Posterior cingulate gyrus (tissue), 11 donors: ENCODE measurements at regions of chr6 and their contacts with region 1.

Region 1: GRCh38 chr6:111483736-111484632 is 966 bp upstream of the REV3L start:
- DNase-seq: peak; percentile 72 to 98 (median 82)

Region 2: DNA sequence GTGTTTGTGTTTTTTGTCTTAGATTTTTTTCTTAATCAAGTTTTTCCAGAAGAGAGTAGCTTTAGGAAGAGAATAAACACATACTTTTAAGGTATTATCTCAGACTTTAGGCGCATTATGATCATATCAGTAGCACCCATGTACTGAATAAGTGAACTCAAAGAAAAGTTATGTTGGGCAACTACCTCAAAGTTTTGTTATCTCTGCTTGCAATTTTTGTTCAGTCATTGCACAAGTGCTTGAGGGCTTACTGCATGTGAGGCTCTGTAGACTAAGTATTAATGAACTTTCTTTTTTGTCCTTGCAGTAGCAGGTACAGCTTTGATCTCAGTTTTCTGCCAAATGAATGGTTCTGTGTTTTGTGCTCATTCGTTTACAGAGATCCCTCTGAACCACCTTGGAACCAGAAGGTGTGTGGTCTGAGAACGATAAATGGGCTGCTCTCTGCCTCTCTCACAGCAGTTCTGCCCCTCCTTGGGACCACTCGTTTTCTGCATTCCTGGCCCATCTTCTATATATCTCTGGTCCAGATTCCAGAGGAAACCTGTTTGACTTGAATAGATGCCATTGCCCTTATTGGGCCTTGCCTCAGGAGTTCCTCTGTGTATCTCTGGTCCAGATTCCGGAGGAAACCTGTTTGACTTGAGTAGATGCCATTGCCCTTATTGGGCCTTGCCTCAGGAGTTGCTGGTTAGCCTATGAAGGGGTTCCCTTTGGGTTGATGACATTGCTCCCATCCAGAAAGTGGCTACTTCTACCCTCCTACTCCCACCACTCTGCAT is 207.5 kb before region 1 on chr6:
- intact Hi-C with region 1: no loop called
- DNase-seq: no peak

Region 3: GRCh38 chr6:111423960-111424846 is 59.8 kb before region 1 on chr6:
- intact Hi-C with region 1: loop called (anchors 5 kb)
- DNase-seq: peak; percentile 26 to 95 (median 56)

Region 4: GRCh38 chr6:111552241-111552744 is 68.3 kb after region 1 on chr6:
- intact Hi-C with region 1: loop called (anchors 10 kb)
- DNase-seq: peak in 8 of 10 donors; percentile 53 to 91 (median 64)

Region 5: DNA sequence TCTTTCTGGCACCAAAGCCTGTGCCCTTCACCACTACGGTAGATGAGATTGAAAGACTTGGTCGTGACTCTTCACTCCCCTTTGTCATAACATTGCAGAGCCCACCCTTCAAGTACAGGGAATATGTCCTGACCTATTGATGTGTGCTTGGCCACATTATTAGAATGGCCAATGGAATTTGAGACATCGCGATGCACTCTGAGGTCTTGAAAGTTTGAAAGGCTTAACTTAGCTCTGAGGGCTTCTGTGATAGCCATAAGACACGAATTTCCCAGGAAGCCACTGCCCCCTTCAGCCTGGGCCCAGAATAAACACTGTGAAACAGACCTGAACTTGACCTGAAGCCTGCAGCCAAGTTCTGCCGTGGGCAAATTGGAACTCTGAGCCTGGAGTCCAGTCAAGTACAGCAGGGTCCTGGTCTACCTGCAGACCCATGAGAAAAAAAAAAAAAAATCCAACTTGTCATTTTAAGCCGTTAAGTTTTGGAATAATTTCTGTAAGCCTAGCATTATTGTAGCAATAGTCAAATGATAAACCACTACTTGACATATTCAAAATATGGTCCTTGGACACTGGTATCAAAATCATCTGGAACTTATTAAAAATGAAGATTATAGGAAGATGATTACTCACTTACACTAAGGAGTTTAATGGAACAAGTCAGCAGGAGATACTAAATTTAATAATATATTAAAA is 158.6 kb after region 1 on chr6:
- intact Hi-C with region 1: loop called (anchors 10 kb)
- DNase-seq: peak in 6 of 10 donors; percentile 34 to 91 (median 54)

Region 6: DNA sequence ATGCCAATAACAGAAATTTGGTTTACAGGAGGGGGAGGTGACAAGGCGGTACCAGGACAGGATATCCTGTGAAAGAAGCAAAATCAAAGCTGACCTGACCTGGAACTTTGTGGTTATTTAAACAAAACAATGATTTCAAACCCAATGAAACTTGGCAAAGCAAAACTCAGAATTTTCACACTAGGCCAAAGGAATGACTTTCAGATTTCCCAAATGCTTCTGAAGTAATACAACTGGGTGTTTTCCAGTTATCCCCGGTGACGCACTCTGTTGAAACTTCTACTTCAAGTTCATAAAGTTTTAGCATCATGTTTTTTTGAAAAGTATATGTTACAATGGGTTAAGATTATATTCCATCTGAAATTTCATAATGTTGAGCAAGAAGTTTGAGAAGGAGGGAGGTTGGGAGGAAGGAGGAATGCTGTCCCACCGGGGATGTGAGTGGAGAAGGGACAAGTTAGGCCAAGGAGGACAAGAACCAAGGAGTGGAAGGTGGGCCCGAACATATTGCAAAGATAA is 199.8 kb after region 1 on chr6:
- intact Hi-C with region 1: no loop called
- DNase-seq: no peak

Region 7: DNA sequence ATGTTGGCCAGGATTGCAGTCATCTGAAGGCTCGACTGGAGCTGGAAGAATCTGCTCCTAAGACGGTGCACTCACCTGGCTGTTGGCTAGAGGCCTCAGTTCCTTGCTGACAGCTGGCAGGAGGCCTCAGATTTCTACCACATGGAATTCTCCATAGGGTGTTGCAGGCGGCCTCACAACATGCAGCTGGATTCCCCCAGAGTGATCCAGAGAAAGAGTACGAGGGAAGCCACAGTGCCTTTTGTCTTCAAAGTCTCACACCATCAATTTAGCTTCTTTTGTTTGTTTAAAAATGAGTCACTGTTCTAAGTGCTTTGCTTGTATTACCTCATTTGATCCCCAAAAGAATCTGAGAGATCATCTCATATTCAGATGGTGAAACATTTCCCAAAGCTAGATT is 454.7 kb after region 1 on chr6:
- intact Hi-C with region 1: no loop called
- DNase-seq: no peak